ENCODE measurements at regions of chr18 and their contacts with region 1.

Region 1: GRCh38 chr18:64752707-64753106 is 603.8 kb upstream of the LINC00305 start:
- DNase-seq: no peak
- H3K4me3 Mint-ChIP-seq: no peak overlapping the region
- H3K27ac Mint-ChIP-seq: no peak overlapping the region
- H3K4me1 Mint-ChIP-seq: no peaks in the 10 kb centered on the region
- H3K27me3 Mint-ChIP-seq: no peaks in the 10 kb centered on the region

Region 2: GRCh38 chr18:64659196-64659595 is 93.5 kb before region 1 on chr18:
- CTCF ChIA-PET with region 1: no interaction called
- intact Hi-C with region 1: no loop called
- DNase-seq: no peak
- H3K4me3 Mint-ChIP-seq: no peak overlapping the region
- H3K27ac Mint-ChIP-seq: no peak overlapping the region
- H3K4me1 Mint-ChIP-seq: no peaks in the 10 kb centered on the region
- H3K27me3 Mint-ChIP-seq: no peaks in the 10 kb centered on the region

Region 3: GRCh38 chr18:64695851-64696553 is 56.7 kb before region 1 on chr18:
- CTCF ChIA-PET with region 1: no interaction called
- intact Hi-C with region 1: loop called (anchors 10 kb)
- DNase-seq: no peak
- H3K4me3 Mint-ChIP-seq: no peak overlapping the region
- H3K27ac Mint-ChIP-seq: no peak overlapping the region
- H3K4me1 Mint-ChIP-seq: no peaks in the 10 kb centered on the region
- H3K27me3 Mint-ChIP-seq: no peaks in the 10 kb centered on the region

Measured in activated naive CD4-positive, alpha-beta T cell treated with anti-CD3 and anti-CD28 coated beads for 36 hours (primary cell).